CD8-positive, alpha-beta T cell (primary cell): ENCODE measurements at regions of chr14 and their contacts with region 1.

Region 1: DNA sequence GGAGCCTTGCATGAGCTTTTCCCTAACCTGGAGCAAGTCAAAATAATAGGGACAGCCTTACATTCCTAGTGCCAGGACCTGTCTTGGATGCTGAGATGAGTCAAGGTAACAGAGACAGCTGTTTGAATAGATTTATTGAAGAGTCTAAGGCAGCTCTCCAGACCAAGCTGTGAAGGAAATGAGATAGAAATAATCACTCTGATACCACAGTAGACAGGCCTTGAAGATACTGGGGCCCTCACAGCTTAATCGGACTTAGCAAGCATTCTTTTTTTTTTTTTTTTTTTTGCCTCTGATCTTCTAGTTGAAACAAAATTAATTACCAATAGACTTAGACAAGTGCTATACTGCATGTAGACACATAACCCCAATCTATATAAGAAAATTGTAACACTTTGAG is 3.1 kb upstream of the RNASE9 start:
- DNase-seq: no peak
- ATAC-seq: no peak
- H3K4me3 ChIP-seq: no peak overlapping the region
- H3K4me3 Mint-ChIP-seq: no peak overlapping the region
- H3K27ac ChIP-seq: no peak overlapping the region
- H3K27ac Mint-ChIP-seq: no peak overlapping the region
- H3K4me1 ChIP-seq: no peaks in the 10 kb centered on the region
- H3K4me1 Mint-ChIP-seq: peaks cover 9% of the 10 kb centered on the region
- H3K27me3 ChIP-seq: no peaks in the 10 kb centered on the region
- H3K27me3 Mint-ChIP-seq: no peaks in the 10 kb centered on the region
- CTCF ChIP-seq: no peak

Region 2: GRCh38 chr14:20606190-20606901 is 42.4 kb after region 1 on chr14:
- CTCF ChIA-PET with region 1: no interaction called
- POLR2A ChIA-PET with region 1: no interaction called
- intact Hi-C with region 1: loop called in 1 of 2 experiments (anchors 1 kb)
- DNase-seq: no peak
- ATAC-seq: no peak
- H3K4me3 ChIP-seq: no peak overlapping the region
- H3K4me3 Mint-ChIP-seq: no peak overlapping the region
- H3K27ac ChIP-seq: no peak overlapping the region
- H3K27ac Mint-ChIP-seq: no peak overlapping the region
- H3K4me1 ChIP-seq: peaks cover 8% of the 10 kb centered on the region
- H3K4me1 Mint-ChIP-seq: no peaks in the 10 kb centered on the region
- H3K27me3 ChIP-seq: no peaks in the 10 kb centered on the region
- H3K27me3 Mint-ChIP-seq: no peaks in the 10 kb centered on the region
- CTCF ChIP-seq: no peak